Vagina (tissue), 2 donors: ENCODE measurements at regions of chr7 and their contacts with region 1.

Region 1: DNA sequence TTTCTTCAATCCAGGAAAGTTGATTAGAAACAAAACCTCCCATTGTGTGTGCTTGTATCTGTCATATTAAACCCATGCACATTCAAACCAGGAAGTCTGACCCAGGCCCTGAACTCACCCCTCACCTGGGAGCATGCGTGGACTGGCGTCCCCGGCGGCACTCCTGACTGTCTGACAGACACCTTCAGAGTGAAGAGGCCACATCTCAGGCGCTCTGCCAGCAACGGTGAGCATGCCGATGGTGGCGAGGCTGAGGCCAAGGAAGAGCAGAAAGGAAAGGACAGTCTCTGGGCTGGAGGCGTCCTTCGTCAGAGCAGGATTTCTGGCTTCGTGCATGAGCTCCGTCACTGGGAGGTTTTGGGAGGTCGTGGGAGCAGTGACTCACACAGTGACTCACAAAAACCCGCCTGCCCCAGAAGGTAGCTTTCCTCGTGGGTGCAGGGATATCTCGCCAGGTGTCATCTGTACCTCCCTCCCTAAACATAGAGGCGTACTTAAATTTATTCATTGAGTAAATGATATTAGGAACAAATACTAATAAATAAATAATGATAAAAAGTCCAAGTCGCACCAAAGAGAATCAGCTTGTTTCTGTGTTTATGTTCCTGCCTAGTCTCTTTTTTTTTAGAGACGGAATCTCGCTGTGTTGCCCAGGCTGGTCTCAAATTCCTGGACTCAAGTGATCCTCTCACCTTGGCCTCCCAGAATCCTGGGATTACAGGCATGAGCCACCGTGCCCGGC is 13.5 kb downstream of the IQCE start:
- DNase-seq: no peak
- H3K4me3 ChIP-seq: no peak overlapping the region
- H3K27ac ChIP-seq: no peak overlapping the region
- H3K4me1 ChIP-seq: peaks cover 4% of the 10 kb centered on the region
- H3K27me3 ChIP-seq: no peaks in the 10 kb centered on the region
- CTCF ChIP-seq: no peak
- POLR2A ChIP-seq: no peak

Region 2: DNA sequence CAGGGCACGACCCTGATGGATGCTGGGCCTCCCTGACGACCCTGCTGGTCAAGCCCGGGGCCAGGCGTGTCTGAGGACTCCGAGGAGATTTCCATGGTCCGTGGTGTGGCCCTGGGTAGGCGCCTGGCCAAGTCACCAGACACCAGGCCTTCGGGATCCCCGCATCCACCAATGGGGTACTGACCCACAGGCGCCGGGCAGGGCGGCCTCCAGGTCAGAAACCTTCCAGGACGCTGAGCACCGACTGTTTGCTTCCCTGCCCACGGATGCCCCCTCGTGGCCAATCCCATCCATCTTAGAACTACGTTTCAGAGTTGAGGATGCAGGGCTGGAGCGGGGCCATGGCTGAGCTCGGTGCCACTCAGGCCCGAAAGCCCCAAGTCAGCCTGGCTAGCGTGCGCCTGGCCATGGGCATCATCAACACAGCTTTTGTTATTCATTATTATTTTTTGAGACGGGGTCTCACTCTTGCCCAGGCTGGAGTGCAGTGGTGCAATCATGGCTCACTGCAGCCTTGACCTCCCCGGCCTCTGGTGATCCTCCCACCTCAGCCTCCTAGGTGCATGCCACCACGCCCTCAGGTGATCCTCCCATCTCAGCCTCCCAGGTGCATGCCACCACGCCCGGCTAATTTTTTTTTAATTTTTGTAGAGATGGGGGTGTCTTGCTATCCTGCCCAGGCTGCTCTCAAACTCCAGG is 108.7 kb after region 1 on chr7:
- intact Hi-C with region 1: loop called (anchors 10 kb)
- DNase-seq: no peak
- H3K4me3 ChIP-seq: no peak overlapping the region
- H3K27ac ChIP-seq: no peak overlapping the region
- H3K4me1 ChIP-seq: peaks cover 21% of the 10 kb centered on the region
- H3K27me3 ChIP-seq: no peaks in the 10 kb centered on the region
- CTCF ChIP-seq: peak; percentile 30 to 75 (median 44)
- POLR2A ChIP-seq: no peak